MCF 10A (cell line): ENCODE measurements at regions of chr2 and their contacts with region 1.

Region 1: GRCh38 chr2:73759285-73759764 is 20.6 kb downstream of the DUSP11 start:
- DNase-seq: no peak
- H3K4me3 Mint-ChIP-seq: no peak overlapping the region
- H3K27ac Mint-ChIP-seq: no peak overlapping the region
- H3K4me1 Mint-ChIP-seq: peaks cover 3% of the 10 kb centered on the region
- H3K27me3 Mint-ChIP-seq: no peaks in the 10 kb centered on the region
- CTCF ChIP-seq: no peak

Region 2: GRCh38 chr2:73779467-73780236 is 20.3 kb after region 1 on chr2 and contains the start of gene DUSP11:
- CTCF ChIA-PET with region 1: interaction called, 4 read pairs
- POLR2A ChIA-PET with region 1: interaction called, 5 read pairs
- intact Hi-C with region 1: loop called (anchors 1 kb)
- DNase-seq: peak; percentile 95
- H3K4me3 Mint-ChIP-seq: peak within 1 kb of the TSS; percentile 94
- H3K27ac Mint-ChIP-seq: peak within 1 kb of the TSS; percentile 96
- H3K4me1 Mint-ChIP-seq: peaks cover 25% of the 10 kb centered on the region
- H3K27me3 Mint-ChIP-seq: no peaks in the 10 kb centered on the region
- CTCF ChIP-seq: peak; percentile 85
- total RNA-seq, gene DUSP11: 45.0 and 46.3 TPM in 2 replicates